ENCODE measurements at regions of chr14 and their contacts with region 1.

Region 1: GRCh38 chr14:50860478-50861086 is 11.3 kb upstream of the ABHD12B start:
- DNase-seq: peak; percentile 81
- CTCF ChIP-seq: peak; percentile 76

Region 2: DNA sequence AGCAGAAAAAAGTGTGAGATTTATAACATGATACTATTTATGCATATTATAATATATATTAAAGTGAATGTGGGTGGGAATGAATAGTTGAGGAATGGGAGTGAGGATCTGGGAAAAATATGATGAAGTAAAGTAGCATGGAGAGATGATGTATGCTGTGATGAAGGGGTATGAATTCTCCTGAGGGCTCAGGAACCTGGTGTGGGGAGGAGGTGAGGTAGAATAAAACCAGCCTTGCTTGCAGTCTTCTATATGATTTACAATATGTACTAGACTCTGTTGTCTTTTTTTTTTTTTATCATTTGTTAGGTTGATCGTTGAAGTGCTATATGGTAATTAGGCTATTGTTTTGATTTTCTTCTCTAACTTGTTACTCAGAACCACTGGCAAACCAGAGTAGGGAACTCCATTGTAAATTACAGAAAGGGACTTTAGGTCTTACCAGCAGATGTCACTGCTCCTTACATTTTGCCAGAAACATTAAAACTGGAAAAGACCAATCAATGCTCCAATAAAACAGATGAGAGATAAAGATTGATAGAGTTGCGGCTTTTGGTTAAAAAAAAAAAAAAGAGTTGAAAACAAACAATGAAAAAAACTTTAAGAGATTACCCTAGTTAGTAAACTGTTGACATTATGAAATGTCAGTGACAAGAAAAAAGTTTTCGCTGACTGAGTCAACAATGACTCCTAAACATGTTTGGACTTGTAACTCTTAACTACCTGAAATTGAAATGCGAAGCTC is 260.7 kb before region 1 on chr14:
- CTCF ChIA-PET with region 1: interaction called, 22 read pairs
- POLR2A ChIA-PET with region 1: no interaction called
- DNase-seq: peak; percentile 17
- CTCF ChIP-seq: peak; percentile 54

Region 3: GRCh38 chr14:50762001-50762930 is 98.3 kb before region 1 on chr14:
- CTCF ChIA-PET with region 1: interaction called, 11 read pairs
- POLR2A ChIA-PET with region 1: no interaction called
- DNase-seq: peak; percentile 69
- CTCF ChIP-seq: no peak

Region 4: DNA sequence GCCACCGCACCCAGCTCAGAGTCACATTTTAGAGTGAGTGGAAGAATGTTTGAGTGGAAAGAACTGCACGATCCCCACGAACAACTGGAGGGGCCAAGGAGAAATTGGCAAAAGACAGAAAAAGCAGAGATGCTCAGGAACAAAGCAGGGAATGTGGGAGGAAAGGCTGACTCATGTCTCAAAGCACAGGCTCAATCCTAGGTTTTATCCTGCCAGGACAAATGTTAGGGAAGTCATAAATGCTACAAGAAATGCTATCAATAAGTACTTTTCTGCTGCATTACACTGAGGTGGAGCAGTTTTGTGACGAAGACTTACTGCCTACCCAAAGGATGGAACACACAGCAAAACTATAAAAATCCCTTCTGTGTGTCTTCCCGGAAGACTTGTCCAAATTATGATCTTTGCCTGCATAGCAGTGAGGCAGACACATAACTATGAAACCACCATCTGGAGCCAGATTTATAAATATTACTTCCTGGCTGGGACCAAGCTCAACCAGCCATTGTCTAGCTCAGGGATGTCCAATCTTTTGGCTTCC is 56.3 kb before region 1 on chr14:
- CTCF ChIA-PET with region 1: interaction called, 14 read pairs
- POLR2A ChIA-PET with region 1: interaction called, 3 read pairs
- DNase-seq: no peak
- CTCF ChIP-seq: no peak

Region 5: GRCh38 chr14:50839048-50839447 is 21.5 kb before region 1 on chr14:
- CTCF ChIA-PET with region 1: interaction called, 15 read pairs
- POLR2A ChIA-PET with region 1: no interaction called
- DNase-seq: no peak
- CTCF ChIP-seq: no peak

Region 6: DNA sequence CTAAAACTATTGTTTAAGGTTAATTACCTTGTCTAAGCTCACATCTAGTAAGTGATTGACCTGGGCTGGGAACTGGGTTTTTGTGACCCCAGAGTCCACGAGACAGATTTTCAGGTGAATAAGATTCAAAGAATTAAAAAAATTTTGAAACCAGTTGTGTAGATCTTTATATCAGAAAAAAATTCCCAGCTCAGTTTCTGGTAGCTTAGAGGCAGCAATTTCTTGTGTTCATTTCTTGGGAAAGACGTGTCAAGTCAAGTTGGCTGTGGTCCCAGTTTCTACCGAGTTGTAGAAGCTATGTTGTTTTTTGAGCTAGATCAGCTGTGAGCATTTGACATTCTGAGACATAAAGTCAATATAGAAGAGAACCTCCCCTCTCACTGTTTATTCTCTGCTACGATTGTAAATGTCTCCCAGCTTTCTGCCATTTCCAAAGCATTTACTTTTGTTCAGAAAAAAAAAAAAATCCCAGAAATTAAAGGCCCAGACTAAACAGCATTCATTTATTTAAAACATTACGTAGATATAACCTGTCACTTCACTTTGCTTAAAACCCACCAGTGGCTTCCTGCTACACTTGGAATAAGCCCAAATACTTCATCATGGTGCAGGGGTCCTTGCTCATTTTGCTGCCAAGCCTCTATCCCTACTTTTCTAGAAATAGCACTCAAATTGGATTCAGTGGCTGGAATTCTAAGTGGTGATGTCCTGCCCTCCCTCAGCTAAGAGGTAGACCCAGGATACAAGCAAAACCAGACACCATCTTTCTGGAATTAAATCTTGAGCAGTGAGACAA is 104.2 kb after region 1 on chr14:
- CTCF ChIA-PET with region 1: no interaction called
- POLR2A ChIA-PET with region 1: no interaction called
- DNase-seq: no peak
- CTCF ChIP-seq: no peak